Endothelial cell of umbilical vein (primary cell): ENCODE measurements at regions of chr12 and their contacts with region 1.

Region 1: GRCh38 chr12:131673888-131674257 is 37.0 kb upstream of the SFSWAP start:
- DNase-seq: no peak
- H3K4me3 ChIP-seq: no peak overlapping the region
- H3K27ac ChIP-seq: no peak overlapping the region
- H3K4me1 ChIP-seq: no peaks in the 10 kb centered on the region
- H3K27me3 ChIP-seq: no peaks in the 10 kb centered on the region
- CTCF ChIP-seq: no peak
- POLR2A ChIP-seq: no peak

Region 2: DNA sequence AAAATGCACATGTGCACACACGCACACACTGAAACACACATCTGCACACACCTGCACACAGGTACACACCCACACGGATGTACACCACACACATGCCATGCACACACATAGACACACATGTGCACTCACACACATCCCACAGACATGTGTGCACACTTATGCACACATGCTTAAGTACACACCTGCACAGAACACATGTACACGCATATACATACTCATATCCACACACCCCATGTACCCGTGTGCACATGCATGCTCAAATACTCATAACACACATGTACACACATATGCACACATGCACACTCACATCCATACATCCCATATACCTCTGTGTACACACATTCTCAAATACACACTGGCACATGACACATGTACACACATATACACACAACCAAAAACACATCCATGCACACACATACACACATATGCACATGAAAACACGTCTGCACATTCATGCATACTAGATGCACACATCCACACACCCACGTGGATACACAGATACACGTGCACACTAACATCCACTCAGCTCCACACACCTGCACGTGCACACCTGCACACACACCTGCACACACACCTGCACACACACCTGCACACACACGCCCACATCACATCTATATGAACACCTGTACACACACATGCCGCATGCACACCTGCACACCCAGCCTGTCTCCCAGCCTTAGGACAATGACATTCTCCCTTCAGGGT is 383.5 kb before region 1 on chr12:
- CTCF ChIA-PET with region 1: no interaction called
- POLR2A ChIA-PET with region 1: no interaction called
- dilution Hi-C with region 1: no loop called
- intact Hi-C with region 1: loop called (anchors 10 kb)
- DNase-seq: no peak
- H3K4me3 ChIP-seq: no peak overlapping the region
- H3K27ac ChIP-seq: no peak overlapping the region
- H3K4me1 ChIP-seq: no peaks in the 10 kb centered on the region
- H3K27me3 ChIP-seq: no peaks in the 10 kb centered on the region
- CTCF ChIP-seq: no peak
- POLR2A ChIP-seq: no peak